Vagina (tissue), 2 donors: ENCODE measurements at regions of chr1 and their contacts with region 1.

Region 1: GRCh38 chr1:77683160-77684148 is 996 bp upstream of the ZZZ3 start:
- DNase-seq: peak in 1 of 2 donors; percentile 95
- H3K4me3 ChIP-seq: peak overlapping the region; percentile 76 to 93
- H3K27ac ChIP-seq: peak overlapping the region; percentile 95
- H3K4me1 ChIP-seq: peaks cover 48% of the 10 kb centered on the region
- H3K27me3 ChIP-seq: no peaks in the 10 kb centered on the region
- CTCF ChIP-seq: peak; percentile 76 to 93 (median 82)
- POLR2A ChIP-seq: no peak

Region 2: GRCh38 chr1:77571642-77572041 is 111.8 kb before region 1 on chr1:
- intact Hi-C with region 1: no loop called
- DNase-seq: no peak
- H3K4me3 ChIP-seq: no peak overlapping the region
- H3K27ac ChIP-seq: no peak overlapping the region
- H3K4me1 ChIP-seq: no peaks in the 10 kb centered on the region
- H3K27me3 ChIP-seq: no peaks in the 10 kb centered on the region
- CTCF ChIP-seq: no peak
- POLR2A ChIP-seq: no peak

Region 3: DNA sequence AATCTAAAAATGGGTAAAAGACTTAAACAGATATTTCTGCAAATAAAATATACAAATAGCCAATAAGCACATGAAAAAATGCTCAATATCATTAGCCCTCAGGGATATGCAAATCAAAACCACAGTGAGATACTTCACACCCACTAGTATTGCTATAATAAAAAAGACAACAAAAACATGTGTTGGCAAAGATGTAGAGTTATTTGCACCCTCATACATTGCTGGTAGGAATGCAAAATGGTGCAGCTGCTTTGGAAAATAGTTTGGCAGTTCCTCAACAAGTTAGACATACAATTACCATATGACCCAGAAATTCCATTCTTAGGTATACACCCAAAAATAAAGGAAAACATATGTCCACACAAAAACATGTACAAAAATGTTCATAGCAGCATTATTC is 31.2 kb before region 1 on chr1:
- intact Hi-C with region 1: no loop called
- DNase-seq: no peak
- H3K4me3 ChIP-seq: no peak overlapping the region
- H3K27ac ChIP-seq: no peak overlapping the region
- H3K4me1 ChIP-seq: peaks cover 8% of the 10 kb centered on the region
- H3K27me3 ChIP-seq: no peaks in the 10 kb centered on the region
- CTCF ChIP-seq: no peak
- POLR2A ChIP-seq: no peak

Region 4: GRCh38 chr1:77744576-77744975 is 61.1 kb after region 1 on chr1:
- intact Hi-C with region 1: no loop called
- DNase-seq: no peak
- H3K4me3 ChIP-seq: no peak overlapping the region
- H3K27ac ChIP-seq: no peak overlapping the region
- H3K4me1 ChIP-seq: peaks cover 24% of the 10 kb centered on the region
- H3K27me3 ChIP-seq: no peaks in the 10 kb centered on the region
- CTCF ChIP-seq: no peak
- POLR2A ChIP-seq: no peak

Region 5: DNA sequence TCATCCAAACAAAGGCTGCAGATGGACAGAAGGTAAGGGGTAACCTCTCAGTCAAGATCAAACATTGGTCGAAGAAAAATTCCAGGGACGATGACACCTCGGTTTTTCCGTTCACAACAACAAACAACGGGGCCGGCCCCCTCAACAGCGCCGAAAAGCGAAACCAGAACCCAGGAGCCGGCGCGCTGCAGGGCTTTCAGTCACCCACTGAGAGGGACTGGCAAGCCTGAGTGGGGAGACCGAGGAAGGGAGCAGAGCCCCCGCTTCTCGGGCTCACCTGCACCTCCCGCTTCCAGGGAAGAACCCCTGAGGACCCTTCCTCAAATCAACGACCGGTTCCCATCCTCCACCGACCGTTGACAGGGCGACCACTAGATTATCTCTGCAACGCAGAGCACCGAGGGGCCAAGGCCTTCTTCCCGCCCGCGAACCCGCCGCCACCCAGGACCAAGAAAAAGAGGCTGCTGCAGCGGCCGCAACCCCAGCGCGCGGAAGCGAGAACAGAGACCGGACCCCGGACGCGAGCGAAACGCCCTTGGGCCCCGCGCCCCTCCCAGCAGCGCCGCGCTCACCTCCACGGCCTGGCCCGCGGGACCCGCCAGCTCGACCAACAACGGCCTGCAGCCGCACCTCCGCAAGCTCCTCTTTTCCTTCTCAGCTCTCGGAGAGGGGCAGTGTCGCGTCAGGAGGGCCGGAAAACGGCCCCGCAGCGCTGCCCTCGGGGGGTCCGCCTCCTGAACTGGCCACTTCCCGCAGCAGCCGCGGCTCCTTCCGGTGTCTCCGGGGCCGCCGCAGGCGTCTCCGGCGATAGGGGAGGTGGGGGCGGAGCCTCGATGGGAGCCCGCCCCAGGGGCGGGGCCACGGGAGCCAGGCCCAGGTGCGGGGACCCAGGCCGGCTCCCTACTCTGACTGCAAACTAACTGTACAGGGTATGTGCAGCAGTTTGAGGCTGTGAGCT is 75.9 kb after region 1 on chr1 and contains the start of gene USP33:
- intact Hi-C with region 1: loop called (anchors 5 kb)
- DNase-seq: peak in 1 of 2 donors; percentile 87
- H3K4me3 ChIP-seq: peak within 1 kb of the TSS; percentile 80 to 96
- H3K27ac ChIP-seq: peak within 1 kb of the TSS; percentile 90
- H3K4me1 ChIP-seq: peaks cover 43% of the 10 kb centered on the region
- H3K27me3 ChIP-seq: no peaks in the 10 kb centered on the region
- CTCF ChIP-seq: no peak
- POLR2A ChIP-seq: peak in 1 of 2 donors; percentile 69
- total RNA-seq, gene USP33: 65.3 TPM